ENCODE measurements at regions of chr11 and their contacts with region 1.

Region 1: DNA sequence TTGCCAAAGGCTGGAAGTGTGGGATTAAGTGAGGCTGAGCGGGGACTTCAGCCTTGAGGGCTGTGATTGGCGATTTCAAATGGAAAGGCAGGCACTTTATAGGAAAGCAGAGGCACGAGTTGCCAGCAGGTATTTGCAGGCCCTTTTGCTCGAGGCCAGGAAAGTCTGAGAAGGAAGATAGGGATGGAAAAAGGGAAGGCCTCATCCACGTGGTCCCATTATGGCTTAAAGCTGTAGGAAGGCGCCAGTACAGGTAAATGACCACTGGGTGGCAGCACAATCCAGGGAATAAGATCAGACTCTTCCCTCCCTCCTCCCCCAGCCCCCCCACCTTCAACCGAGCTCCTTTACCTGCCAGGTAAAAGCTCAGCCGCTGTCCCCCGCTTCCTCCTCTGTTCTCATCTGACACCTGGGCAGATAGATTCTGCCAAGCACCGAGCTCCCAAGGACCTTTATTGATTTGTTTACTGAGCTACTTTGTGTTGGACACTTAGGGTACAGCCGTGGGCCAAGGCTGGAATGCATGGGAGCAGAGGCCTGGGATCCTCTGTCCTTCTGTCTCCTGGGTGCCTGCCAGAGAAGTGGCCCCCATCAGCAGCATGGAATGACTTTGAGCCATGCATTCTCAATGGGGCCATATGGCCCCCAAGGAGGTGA is 7.5 kb downstream of the P2RX3 start:
- DNase-seq: peak; percentile 84
- ATAC-seq: peak; percentile 87
- H3K4me3 Mint-ChIP-seq: no peak overlapping the region
- H3K27ac Mint-ChIP-seq: peak overlapping the region; percentile 52
- H3K4me1 Mint-ChIP-seq: peaks cover 5% of the 10 kb centered on the region
- H3K27me3 Mint-ChIP-seq: no peaks in the 10 kb centered on the region

Region 2: GRCh38 chr11:57031556-57031955 is 314.1 kb before region 1 on chr11:
- CTCF ChIA-PET with region 1: no interaction called
- POLR2A ChIA-PET with region 1: no interaction called
- intact Hi-C with region 1: no loop called
- DNase-seq: no peak
- ATAC-seq: no peak
- H3K4me3 Mint-ChIP-seq: no peak overlapping the region
- H3K27ac Mint-ChIP-seq: no peak overlapping the region
- H3K4me1 Mint-ChIP-seq: no peaks in the 10 kb centered on the region
- H3K27me3 Mint-ChIP-seq: no peaks in the 10 kb centered on the region

Region 3: GRCh38 chr11:57288771-57289579 is 56.7 kb before region 1 on chr11:
- CTCF ChIA-PET with region 1: no interaction called
- POLR2A ChIA-PET with region 1: no interaction called
- intact Hi-C with region 1: loop called in 1 of 2 experiments (anchors 10 kb)
- DNase-seq: peak; percentile 29
- ATAC-seq: peak; percentile 82
- H3K4me3 Mint-ChIP-seq: no peak overlapping the region
- H3K27ac Mint-ChIP-seq: no peak overlapping the region
- H3K4me1 Mint-ChIP-seq: no peaks in the 10 kb centered on the region
- H3K27me3 Mint-ChIP-seq: peaks cover 16% of the 10 kb centered on the region

Region 4: DNA sequence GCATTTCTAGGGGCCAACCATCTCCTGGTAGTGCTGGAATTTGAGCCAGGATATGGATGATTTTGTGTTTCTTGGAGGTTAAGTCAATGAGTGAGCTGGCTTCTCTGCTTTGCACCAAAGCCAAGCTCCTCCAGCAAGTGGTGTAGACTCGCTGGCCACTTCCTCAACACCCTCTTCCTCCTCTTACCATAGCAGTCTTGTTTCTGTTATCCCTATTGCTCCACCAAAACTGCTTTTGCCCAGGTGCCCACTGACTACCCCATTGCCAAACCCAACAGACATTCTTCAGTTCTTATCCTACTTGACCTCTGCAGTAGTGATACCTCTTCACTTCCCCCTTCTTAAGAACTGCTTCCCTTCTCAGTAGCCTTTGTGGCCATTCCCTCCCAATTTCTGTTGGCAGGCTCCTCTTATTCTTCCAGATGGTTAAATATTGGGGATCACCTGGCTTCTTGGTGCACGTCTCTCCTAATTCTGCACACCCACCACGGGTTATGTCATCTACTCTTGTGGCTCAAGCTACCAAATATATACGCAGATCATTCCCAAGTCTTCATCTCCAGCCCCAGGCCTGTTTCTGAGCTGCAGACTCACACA is 51.8 kb after region 1 on chr11:
- CTCF ChIA-PET with region 1: interaction called, 3 read pairs
- POLR2A ChIA-PET with region 1: no interaction called
- intact Hi-C with region 1: loop called in 1 of 2 experiments (anchors 2 kb)
- DNase-seq: no peak
- ATAC-seq: no peak
- H3K4me3 Mint-ChIP-seq: no peak overlapping the region
- H3K27ac Mint-ChIP-seq: no peak overlapping the region
- H3K4me1 Mint-ChIP-seq: no peaks in the 10 kb centered on the region
- H3K27me3 Mint-ChIP-seq: no peaks in the 10 kb centered on the region

Region 5: DNA sequence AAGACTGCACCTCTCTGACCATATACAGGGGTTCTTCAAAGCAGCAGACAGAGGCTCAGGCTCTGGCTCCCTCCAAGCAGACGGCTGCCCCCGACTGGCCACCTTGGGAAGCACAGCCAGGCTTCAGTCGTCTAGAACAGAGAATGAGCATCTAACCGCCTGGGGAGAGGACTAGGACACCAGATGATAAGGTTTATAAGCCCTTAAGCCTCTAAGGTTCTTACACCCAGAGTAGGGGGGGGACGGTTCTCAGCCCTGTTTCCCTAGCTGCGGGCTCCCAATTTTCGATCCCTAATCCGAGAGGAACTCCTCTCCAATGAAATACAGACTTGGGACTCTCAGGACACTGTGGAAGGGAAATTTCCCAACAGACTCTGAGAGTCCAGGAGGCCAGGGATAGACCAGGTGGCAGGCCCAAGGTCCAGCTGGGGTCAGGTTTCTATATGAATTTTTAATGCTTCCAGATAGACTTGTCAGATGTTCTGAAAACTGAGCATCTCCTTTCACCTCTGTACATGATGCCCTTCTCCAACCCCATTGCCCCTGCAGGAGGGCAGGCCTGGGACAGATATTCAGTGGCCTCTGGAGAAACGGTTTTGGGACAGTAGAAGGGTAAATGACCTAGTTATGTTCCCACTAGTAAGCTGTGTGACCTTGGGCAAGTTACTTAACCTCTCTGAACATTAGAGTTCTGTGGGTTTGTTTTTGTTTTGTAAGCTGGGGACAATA is 134.9 kb after region 1 on chr11:
- CTCF ChIA-PET with region 1: interaction called, 10 read pairs
- POLR2A ChIA-PET with region 1: no interaction called
- intact Hi-C with region 1: loop called (anchors 1 to 2 kb)
- DNase-seq: peak; percentile 90
- ATAC-seq: peak; percentile 69
- H3K4me3 Mint-ChIP-seq: no peak overlapping the region
- H3K27ac Mint-ChIP-seq: no peak overlapping the region
- H3K4me1 Mint-ChIP-seq: peaks cover 15% of the 10 kb centered on the region
- H3K27me3 Mint-ChIP-seq: peaks cover 11% of the 10 kb centered on the region